H1 (cell line): ENCODE measurements at regions of chr16 and their contacts with region 1.

Region 1: GRCh38 chr16:85564277-85565051 is 48.7 kb upstream of the GSE1 start:
- DNase-seq: no peak
- H3K4me3 ChIP-seq: no peak overlapping the region
- H3K27ac ChIP-seq: no peak overlapping the region
- H3K4me1 ChIP-seq: peaks cover 14 to 52% (median 27%) of the 10 kb centered on the region in 4 experiments
- H3K27me3 ChIP-seq: no peaks in the 10 kb centered on the region
- CTCF ChIP-seq: peak; percentile 53 to 70 (median 68)
- EP300 ChIP-seq: no peak
- POLR2A ChIP-seq: no peak
- RAD21 ChIP-seq: peak in 1 of 2 experiments; percentile 18; a peak in 1 of 4 replicates

Region 2: GRCh38 chr16:85437166-85438055 is 127.1 kb before region 1 on chr16:
- CTCF ChIA-PET with region 1: interaction called, 11 read pairs
- POLR2A ChIA-PET with region 1: no interaction called
- DNase-seq: no peak
- H3K4me3 ChIP-seq: peak overlapping the region in 1 of 4 experiments; percentile 50; a peak in 2 of 8 replicates
- H3K27ac ChIP-seq: peak overlapping the region; percentile 21; the same call in 1 of the 2 replicates
- H3K4me1 ChIP-seq: peaks cover 14 to 47% (median 35%) of the 10 kb centered on the region in 4 experiments
- H3K27me3 ChIP-seq: peaks cover 0 to 7% (median 0%) of the 10 kb centered on the region in 4 experiments; a peak in 3 of 7 replicates
- CTCF ChIP-seq: no peak
- EP300 ChIP-seq: no peak
- POLR2A ChIP-seq: no peak; a peak in 1 of 3 replicates
- RAD21 ChIP-seq: no peak

Region 3: DNA sequence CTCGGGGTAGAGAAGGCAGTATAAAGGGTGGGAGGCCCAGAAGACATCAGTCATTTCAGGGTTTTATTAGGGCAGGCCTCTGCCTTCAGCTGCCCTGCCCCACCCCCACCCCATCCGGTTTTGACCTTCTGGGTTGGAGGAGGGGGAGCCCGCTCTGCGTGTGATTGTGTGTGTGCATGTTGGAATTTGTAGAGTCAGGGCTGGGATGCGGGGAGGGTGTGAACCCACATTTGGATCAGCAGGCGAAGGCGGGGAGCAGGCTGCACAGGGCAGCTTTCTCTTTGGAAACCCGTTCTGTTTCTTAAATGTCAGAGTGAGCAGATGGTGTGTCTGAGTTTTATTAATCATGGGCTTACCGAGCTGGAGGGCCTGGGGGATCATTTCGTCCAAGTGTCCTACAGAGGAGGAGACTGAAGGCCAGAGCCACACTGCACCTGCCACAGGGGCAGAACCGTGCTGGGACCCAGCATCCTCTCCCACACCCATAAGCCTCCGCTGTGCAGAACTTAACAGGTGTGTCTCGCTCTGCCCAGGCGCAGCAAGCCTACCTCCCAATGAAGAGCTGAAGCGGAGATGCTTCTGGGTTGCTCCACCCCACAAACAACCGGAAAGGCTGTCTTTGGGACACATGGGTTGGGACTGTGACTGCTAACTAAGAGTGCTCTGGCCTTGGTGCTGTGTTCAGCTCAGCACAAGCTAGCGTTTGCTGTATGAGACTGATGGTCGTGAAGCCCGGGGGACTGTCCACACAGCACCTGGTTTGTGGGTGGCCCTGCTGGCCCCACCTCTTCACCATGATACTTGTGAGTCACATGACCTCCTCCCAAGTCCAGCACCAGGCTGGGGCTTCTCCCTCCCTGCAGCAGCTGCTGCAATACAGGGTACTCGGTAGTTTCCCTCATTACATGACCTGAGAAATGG is 22.2 kb before region 1 on chr16:
- CTCF ChIA-PET with region 1: interaction called, 12 read pairs
- POLR2A ChIA-PET with region 1: no interaction called
- DNase-seq: no peak
- H3K4me3 ChIP-seq: no peak overlapping the region
- H3K27ac ChIP-seq: no peak overlapping the region
- H3K4me1 ChIP-seq: peaks cover 0 to 14% (median 9%) of the 10 kb centered on the region in 4 experiments; a peak in 6 of 7 replicates
- H3K27me3 ChIP-seq: no peaks in the 10 kb centered on the region
- CTCF ChIP-seq: no peak
- EP300 ChIP-seq: no peak
- POLR2A ChIP-seq: no peak
- RAD21 ChIP-seq: no peak

Region 4: DNA sequence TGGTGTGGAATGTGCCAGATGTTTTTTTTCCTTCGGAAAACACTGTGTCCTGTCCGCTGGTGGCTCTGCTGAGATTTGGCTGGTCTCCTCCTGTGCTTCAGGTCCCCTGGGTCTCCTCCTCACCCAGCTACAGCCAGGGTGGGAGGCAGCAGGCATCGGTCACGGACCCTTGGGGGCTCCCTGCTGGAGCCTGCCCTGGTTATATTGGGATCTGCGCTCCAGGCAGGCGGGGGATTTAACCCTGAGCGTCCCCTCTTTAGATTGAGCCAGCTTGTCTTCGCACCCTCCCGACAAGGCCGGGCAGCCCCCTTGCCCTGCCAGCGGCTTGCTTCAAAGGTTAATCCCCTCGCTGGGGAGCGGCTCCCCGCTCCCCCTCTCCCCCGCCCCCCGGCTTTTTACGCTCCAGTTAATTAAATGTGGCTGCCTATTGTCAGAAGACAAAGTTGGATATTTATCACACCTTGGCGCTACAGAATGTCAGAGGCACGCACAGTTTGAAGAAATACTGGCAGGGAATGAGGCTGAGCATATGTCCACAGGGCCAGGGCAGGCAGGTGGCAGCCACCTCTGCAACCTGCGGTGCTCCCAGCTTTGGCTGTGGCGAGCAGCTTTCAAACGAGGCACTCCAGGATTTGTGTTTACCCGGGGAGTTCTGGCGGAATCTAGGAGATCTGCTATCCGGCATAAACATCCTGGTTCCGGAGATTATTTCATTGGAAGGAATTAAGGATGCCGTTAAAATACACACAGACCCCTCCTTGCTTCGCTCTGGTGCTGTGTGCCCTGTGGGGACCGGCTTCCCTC is 10.4 kb after region 1 on chr16:
- CTCF ChIA-PET with region 1: interaction called, 173 read pairs
- POLR2A ChIA-PET with region 1: interaction called, 27 read pairs
- DNase-seq: no peak
- H3K4me3 ChIP-seq: no peak overlapping the region
- H3K27ac ChIP-seq: no peak overlapping the region
- H3K4me1 ChIP-seq: peaks cover 12 to 69% (median 46%) of the 10 kb centered on the region in 4 experiments
- H3K27me3 ChIP-seq: peaks cover 0 to 7% (median 2%) of the 10 kb centered on the region in 4 experiments; a peak in 2 of 7 replicates
- CTCF ChIP-seq: no peak
- EP300 ChIP-seq: no peak
- POLR2A ChIP-seq: no peak
- RAD21 ChIP-seq: no peak

Region 5: DNA sequence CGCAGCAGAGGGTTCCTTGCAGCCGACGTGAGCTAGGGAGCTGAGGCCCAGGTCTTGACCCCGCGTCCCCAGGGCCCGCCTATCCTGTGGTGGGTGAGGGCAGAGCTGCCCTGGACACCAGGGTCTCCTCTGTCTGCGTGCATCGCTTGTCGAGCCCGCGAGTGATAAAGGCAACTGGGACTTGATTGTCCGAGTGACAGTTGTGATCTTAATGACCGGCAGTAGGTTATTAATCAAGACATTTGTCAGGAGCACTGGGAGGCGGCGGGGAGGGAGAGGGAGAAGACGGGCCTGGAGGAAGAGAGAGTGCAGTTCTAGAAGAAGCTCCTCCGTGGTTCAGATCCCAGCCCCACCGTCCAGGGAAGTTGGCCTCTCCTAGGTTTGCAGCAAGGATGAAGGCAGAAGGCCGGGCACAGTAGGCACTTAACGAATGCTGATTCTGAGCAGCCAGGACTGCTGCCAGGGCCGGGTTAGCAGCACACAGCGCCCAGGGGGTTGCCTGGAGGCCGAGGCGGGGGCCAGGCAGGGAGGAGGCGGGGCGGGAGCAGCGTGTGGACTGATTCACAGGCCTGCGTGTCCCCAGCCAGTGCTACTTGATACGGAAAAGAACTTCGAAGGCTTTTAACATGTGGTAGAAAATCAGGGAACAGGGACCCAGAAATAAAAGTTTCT is 37.4 kb after region 1 on chr16:
- CTCF ChIA-PET with region 1: interaction called, 27 read pairs
- POLR2A ChIA-PET with region 1: interaction called, 5 read pairs
- DNase-seq: peak in 1 of 2 experiments; percentile 66
- H3K4me3 ChIP-seq: no peak overlapping the region
- H3K27ac ChIP-seq: no peak overlapping the region
- H3K4me1 ChIP-seq: peaks cover 10 to 58% (median 46%) of the 10 kb centered on the region in 4 experiments
- H3K27me3 ChIP-seq: no peaks in the 10 kb centered on the region
- CTCF ChIP-seq: no peak
- EP300 ChIP-seq: no peak
- POLR2A ChIP-seq: no peak
- RAD21 ChIP-seq: no peak

Region 6: GRCh38 chr16:85639536-85640253 is 75.2 kb after region 1 on chr16:
- CTCF ChIA-PET with region 1: no interaction called
- POLR2A ChIA-PET with region 1: no interaction called
- DNase-seq: no peak
- H3K4me3 ChIP-seq: no peak overlapping the region
- H3K27ac ChIP-seq: 0 out of 2 replicates have a peak overlapping the region, but pooled peaks have one; percentile 34
- H3K4me1 ChIP-seq: peaks cover 0 to 8% (median 0%) of the 10 kb centered on the region in 4 experiments; a peak in 4 of 7 replicates
- H3K27me3 ChIP-seq: no peaks in the 10 kb centered on the region
- CTCF ChIP-seq: no peak
- EP300 ChIP-seq: no peak
- POLR2A ChIP-seq: no peak
- RAD21 ChIP-seq: no peak

Region 7: GRCh38 chr16:85659805-85660495 is 95.5 kb after region 1 on chr16:
- CTCF ChIA-PET with region 1: no interaction called
- POLR2A ChIA-PET with region 1: no interaction called
- DNase-seq: peak; percentile 57 to 98
- H3K4me3 ChIP-seq: no peak overlapping the region
- H3K27ac ChIP-seq: no peak overlapping the region
- H3K4me1 ChIP-seq: no peaks in the 10 kb centered on the region; a peak in 1 of 7 replicates
- H3K27me3 ChIP-seq: no peaks in the 10 kb centered on the region
- CTCF ChIP-seq: peak; percentile 91 to 98 (median 97)
- EP300 ChIP-seq: no peak
- POLR2A ChIP-seq: no peak
- RAD21 ChIP-seq: peak; percentile 68 to 82